Stomach (tissue), 19 donors: ENCODE measurements at regions of chr10 and their contacts with region 1.

Region 1: GRCh38 chr10:27319752-27320561 is 79.4 kb upstream of the ACBD5 start:
- DNase-seq: peak; percentile 68 to 77
- H3K4me3 ChIP-seq: peak overlapping the region; percentile 33 to 50 (median 38)
- H3K27ac ChIP-seq: peak overlapping the region in 3 of 5 donors; percentile 57 to 88 (median 81)
- H3K4me1 ChIP-seq: peaks cover 4 to 14% (median 10%) of the 10 kb centered on the region in 4 donors
- H3K27me3 ChIP-seq: peaks cover 3 to 14% (median 10%) of the 10 kb centered on the region in 3 donors
- CTCF ChIP-seq: no peak
- EP300 ChIP-seq: no peak
- POLR2A ChIP-seq: no peak

Region 2: GRCh38 chr10:26621889-26622711 is 697.9 kb before region 1 on chr10:
- intact Hi-C with region 1: loop called (anchors 10 kb)
- DNase-seq: peak; percentile 69 to 85
- H3K4me3 ChIP-seq: peak overlapping the region; percentile 38 to 54 (median 44)
- H3K27ac ChIP-seq: peak overlapping the region; percentile 78 to 95 (median 87)
- H3K4me1 ChIP-seq: peaks cover 11 to 27% (median 15%) of the 10 kb centered on the region in 4 donors
- H3K27me3 ChIP-seq: peaks cover 0 to 24% (median 3%) of the 10 kb centered on the region in 3 donors
- CTCF ChIP-seq: no peak
- EP300 ChIP-seq: no peak
- POLR2A ChIP-seq: no peak